ENCODE measurements at regions of chr1 and their contacts with region 1.

Region 1: GRCh38 chr1:161201828-161202725 is at the start of gene NDUFS2:
- DNase-seq: peak; percentile 95
- H3K4me3 ChIP-seq: peak within 1 kb of the TSS; percentile 95
- CTCF ChIP-seq: peak; percentile 47

Region 2: DNA sequence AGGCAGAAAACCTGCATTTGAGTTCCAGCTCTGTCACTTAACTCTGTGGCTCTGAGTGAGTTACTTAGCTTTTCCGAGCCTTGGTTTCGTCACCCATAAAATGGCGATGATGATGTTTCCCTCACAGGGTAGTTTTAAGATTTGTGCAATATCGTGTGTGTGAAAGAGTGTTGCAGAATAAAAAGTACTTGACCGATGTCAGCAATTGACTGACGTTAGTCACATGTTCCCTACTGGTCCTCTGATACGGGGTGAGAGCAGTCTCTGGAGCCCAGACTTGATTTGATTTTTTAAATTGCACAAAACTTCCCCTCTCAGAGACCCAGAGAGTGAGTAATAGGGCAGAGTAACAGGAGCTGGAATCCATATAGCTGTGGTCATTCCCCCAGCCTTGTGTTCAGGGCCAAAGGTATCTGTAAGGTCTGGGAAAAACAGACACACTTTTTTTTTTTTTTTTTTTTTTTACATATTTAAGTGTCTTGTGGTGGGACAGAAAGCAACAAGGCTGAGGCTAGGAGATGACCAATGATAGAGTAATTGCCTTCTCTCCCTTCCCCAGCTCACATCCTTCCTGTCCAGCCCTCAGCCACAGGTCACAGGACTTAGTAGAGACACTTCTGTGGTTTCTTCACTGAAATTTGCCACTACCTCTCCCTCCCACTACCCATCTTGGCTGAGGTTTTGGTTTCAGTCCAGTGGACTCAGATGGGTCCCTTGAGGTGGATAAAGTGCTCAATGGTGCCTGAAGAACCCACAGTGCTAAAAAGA is 15.1 kb after region 1 on chr1:
- CTCF ChIA-PET with region 1: interaction called, 758 read pairs
- POLR2A ChIA-PET with region 1: interaction called, 13 read pairs
- DNase-seq: no peak
- H3K4me3 ChIP-seq: no peak overlapping the region
- CTCF ChIP-seq: no peak

Measured in AG04449 (cell line).